Tibial artery (tissue), 4 donors: ENCODE measurements at regions of chr1 and their contacts with region 1.

Region 1: GRCh38 chr1:176374967-176375569 is 87.9 kb upstream of the PAPPA2 start:
- DNase-seq: peak; percentile 81 to 83
- H3K4me3 ChIP-seq: no peak overlapping the region
- H3K27ac ChIP-seq: no peak overlapping the region
- H3K4me1 ChIP-seq: no peaks in the 10 kb centered on the region
- H3K27me3 ChIP-seq: no peaks in the 10 kb centered on the region
- CTCF ChIP-seq: peak; percentile 61 to 68

Region 2: DNA sequence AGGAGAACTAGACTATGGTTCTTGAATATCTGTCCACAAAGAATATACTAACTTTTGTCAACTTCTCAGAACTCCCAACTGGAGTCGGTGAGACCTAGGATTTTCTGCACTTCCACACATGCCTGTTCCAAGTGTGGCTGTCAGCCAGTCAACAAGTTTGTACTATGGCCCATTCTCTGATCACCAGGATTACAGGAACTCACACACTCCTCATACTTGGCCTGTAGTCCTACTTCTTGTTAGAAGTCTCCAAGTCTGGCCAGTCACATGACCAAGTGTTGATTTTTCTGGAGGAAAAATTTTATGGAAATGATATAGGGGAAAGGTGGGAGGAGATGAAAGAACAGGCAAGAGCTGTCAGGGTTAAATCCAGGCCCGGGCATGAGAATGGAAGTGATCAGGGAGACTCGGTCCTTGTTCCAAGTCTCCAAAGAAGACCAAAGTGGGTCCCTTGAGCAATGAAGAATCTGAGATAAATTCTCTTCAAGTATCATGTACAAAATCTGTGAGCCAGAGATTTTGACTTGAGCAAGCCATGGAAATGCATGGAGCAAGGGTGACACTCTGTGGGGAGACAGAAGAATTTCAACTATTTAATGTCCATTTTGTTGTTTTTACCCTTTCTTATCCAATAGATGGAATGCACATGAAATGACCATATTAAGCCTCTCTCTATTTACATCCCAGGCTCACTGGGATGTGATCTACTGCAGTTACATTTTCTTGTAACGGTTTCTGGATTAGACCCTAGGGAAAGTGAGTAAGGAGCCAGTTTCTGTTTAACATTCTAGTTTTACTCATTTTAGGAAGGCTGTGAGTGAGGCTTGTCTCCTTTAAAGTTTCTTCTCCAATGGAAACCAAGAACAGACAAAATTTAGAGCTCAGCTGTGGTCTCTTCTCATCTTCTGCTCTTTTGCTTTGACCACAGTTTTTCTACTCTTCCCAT is 468.6 kb after region 1 on chr1:
- intact Hi-C with region 1: loop called (anchors 10 kb)
- DNase-seq: peak in 1 of 2 donors; percentile 38
- H3K4me3 ChIP-seq: no peak overlapping the region
- H3K27ac ChIP-seq: peak overlapping the region in 1 of 2 donors; percentile 12
- H3K4me1 ChIP-seq: peaks cover 0 to 12% (median 7%) of the 10 kb centered on the region in 4 donors
- H3K27me3 ChIP-seq: no peaks in the 10 kb centered on the region
- CTCF ChIP-seq: peak; percentile 80 to 81

Region 3: DNA sequence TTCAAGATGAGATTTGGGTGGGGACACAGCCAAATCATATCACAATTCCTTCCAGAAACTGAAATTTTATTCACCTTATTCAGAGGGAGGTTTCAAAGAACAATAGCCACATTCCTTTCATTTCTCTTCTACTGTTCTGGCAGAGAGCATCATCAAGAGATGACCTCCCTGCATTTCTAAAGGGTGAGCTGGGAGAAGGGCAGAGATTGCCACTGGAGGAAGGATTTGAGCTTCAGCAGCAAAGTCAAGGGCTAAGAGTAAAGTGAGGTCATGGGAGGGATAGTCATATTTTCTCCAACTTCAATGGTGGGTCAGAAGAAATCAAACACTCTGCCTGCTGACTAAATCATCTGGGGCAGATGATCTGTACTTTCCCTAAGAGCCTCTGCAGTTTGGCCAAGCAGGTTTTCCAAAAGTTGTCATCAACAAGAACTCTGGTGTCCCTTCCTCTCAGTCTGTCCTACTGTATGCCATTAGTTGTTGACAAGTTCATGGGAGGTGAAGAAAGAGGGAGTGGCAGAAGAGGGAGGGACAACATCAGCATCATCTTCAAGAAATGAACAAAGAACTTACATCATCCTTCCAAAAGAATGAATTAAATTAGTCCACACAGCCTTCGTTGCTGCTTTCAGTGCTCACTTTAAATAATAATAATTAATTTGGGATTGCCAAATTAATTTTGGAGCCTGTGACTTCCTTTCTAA is 491.1 kb after region 1 on chr1:
- intact Hi-C with region 1: no loop called
- DNase-seq: no peak
- H3K4me3 ChIP-seq: no peak overlapping the region
- H3K27ac ChIP-seq: no peak overlapping the region
- H3K4me1 ChIP-seq: no peaks in the 10 kb centered on the region
- H3K27me3 ChIP-seq: no peaks in the 10 kb centered on the region
- CTCF ChIP-seq: no peak

Region 4: GRCh38 chr1:176880954-176881595 is 506.0 kb after region 1 on chr1:
- intact Hi-C with region 1: loop called (anchors 10 kb)
- DNase-seq: peak; percentile 39 to 72
- H3K4me3 ChIP-seq: no peak overlapping the region
- H3K27ac ChIP-seq: no peak overlapping the region
- H3K4me1 ChIP-seq: peaks cover 0 to 3% (median 0%) of the 10 kb centered on the region in 4 donors
- H3K27me3 ChIP-seq: no peaks in the 10 kb centered on the region
- CTCF ChIP-seq: peak; percentile 71 to 73